GM12878 (cell line): ENCODE measurements at regions of chr9 and their contacts with region 1.

Region 1: DNA sequence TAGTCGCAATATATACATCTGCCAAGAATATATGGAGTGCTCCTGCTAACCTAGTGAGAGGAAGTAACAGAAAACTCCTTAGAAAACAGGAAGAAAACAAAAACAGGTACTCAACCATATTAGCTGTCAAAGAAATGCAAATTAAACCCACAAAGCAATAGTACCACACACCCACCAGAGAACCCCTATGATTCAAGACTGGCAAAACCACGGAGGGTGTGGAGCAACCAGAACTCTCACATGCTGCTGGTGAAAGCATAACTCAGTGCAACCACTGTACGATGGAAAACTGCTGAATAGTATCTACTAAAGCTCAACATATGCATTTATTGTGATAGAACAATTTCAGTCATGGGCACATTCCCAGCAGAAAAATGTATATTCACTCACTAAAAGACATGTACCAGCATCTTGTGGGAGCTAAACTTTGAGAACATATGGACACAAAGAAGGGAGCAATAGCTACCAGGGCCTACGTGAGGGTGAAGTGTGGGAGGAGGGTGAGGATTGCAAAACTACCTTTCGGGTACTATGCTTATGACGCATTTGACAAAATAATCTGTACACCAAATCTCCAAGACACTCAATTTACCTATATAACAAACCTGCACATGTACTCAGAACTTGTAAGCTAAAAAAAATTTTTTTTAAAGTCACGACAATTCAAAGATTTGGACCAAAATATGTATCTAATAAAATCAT is 34.0 kb downstream of the PTPN3 start:
- DNase-seq: peak; percentile 31
- ATAC-seq: peak; percentile 86
- H3K4me3 ChIP-seq: no peak overlapping the region
- H3K27ac ChIP-seq: no peak overlapping the region
- H3K4me1 ChIP-seq: peaks cover 4% of the 10 kb centered on the region; the same call in 1 of the 2 replicates
- H3K27me3 ChIP-seq: no peaks in the 10 kb centered on the region; a peak in 2 of 4 replicates
- CTCF ChIP-seq: no peak
- EP300 ChIP-seq: no peak
- POLR2A ChIP-seq: no peak
- RAD21 ChIP-seq: no peak

Region 2: DNA sequence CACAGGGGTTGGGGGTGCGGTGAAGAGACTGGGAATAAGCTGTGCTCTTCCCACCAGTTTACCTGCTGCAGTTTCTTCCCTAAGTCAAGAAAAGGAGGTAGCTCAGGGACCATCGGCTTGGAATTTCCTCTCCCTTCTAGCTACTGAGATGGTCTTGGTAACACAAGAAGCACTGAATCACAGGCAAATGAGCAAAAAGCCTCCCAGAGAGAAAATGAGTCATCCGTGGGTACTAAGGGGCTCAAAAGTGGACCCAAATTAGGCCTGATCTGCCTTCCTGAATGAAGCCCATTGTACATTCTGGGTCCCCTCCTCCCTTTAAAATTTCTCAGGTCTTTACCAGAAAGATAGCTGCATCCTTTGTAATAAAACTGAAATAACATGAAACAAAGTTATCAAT is 15.9 kb before region 1 on chr9:
- CTCF ChIA-PET with region 1: interaction called, 234 read pairs
- POLR2A ChIA-PET with region 1: interaction called, 5 read pairs
- RAD21 ChIA-PET with region 1: interaction called, 135 read pairs
- SMC1A ChIA-PET with region 1: interaction called, 131 read pairs
- in situ Hi-C with region 1: no loop called
- intact Hi-C with region 1: no loop called
- DNase-seq: no peak
- ATAC-seq: no peak
- H3K4me3 ChIP-seq: no peak overlapping the region
- H3K27ac ChIP-seq: no peak overlapping the region
- H3K4me1 ChIP-seq: no peaks in the 10 kb centered on the region
- H3K27me3 ChIP-seq: no peaks in the 10 kb centered on the region
- CTCF ChIP-seq: no peak
- EP300 ChIP-seq: no peak
- POLR2A ChIP-seq: no peak
- RAD21 ChIP-seq: no peak